ENCODE measurements at regions of chr1 and their contacts with region 1.

Region 1: GRCh38 chr1:114274621-114275317 is 121.1 kb upstream of the SYT6 start:
- DNase-seq: peak in 1 of 2 donors; percentile 13
- ATAC-seq: peak in 6 of 8 donors; percentile 28 to 76 (median 66)
- H3K4me3 ChIP-seq: no peak overlapping the region
- H3K27ac ChIP-seq: peak overlapping the region in 4 of 10 donors; percentile 18 to 57 (median 40)
- H3K4me1 ChIP-seq: peaks cover 0 to 15% (median 4%) of the 10 kb centered on the region in 9 donors
- H3K27me3 ChIP-seq: no peaks in the 10 kb centered on the region
- CTCF ChIP-seq: no peak

Region 2: DNA sequence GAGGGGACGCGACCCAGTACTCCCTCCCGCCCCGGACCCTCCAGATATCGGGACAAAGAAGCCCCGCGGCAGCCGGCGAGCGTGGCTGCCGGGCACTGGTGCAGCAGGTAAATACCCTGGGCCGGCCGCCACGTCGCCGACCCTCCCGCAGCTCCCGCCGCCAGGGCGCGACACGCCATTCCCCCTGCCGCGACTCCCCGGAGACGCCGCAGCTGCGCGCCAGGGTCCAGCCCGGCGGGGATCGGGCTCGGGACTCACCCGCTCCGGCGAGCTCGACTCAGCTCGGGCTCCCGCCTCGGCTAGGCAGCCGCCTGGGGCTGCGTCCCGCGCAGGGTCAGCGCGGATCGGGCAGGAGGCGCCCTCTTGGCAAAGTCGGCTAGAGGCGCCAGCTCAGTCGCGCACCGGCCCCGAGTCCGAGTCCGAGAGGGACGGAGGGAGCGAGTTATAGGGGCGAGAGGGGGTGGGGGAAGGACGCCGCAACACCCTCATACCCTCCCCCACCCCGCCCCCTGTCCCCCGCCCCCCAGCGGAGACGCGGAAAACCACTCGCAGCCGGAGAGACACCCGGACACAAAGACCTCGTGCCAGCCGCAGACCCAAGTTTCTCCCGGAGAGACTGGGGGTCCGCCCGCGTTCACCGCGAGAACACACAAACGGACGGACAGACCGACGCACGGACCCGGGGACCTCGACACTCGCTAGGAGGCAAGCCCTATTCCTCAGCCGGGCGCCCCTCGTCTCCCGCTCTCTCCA is 122.1 kb before region 1 on chr1:
- intact Hi-C with region 1: loop called in 1 of 10 experiments (anchors 5 kb)
- DNase-seq: peak; percentile 10 to 49
- ATAC-seq: peak; percentile 63 to 79 (median 71)
- H3K4me3 ChIP-seq: peak overlapping the region; percentile 14 to 54 (median 51)
- H3K27ac ChIP-seq: no peak overlapping the region
- H3K4me1 ChIP-seq: peaks cover 5 to 33% (median 24%) of the 10 kb centered on the region in 9 donors
- H3K27me3 ChIP-seq: peaks cover 36 to 99% (median 97%) of the 10 kb centered on the region in 7 donors
- CTCF ChIP-seq: peak in 3 of 9 donors; percentile 25 to 37 (median 29)

Region 3: DNA sequence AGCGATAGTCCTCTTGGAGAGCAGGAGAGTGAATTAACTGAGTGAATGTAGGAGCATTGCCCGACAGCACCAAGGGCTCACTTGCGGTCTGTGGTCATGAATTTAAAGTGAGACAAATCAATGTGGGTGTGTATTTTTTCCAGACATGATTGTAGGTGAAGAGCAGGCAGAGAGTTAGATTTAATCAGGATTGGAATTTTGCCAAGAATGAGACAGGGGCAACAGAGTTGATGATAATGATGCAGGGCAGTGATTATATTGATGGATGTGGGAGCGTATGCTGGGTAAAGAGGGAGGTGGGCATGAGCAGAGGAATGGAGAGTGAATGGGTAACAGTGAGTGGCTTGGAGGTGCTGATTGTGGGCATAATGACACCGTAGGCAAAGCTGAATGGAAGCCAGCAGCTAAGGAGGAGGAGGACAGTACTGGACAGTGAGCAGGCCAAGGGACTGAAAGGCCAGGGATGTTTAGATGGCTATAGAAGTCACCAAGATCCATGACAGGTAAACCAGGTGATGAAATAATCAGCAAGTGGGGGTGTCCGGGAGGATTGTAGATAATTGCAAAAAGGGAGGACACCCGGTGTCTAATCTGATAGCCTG is 101.0 kb before region 1 on chr1:
- intact Hi-C with region 1: no loop called
- DNase-seq: no peak
- ATAC-seq: no peak
- H3K4me3 ChIP-seq: no peak overlapping the region
- H3K27ac ChIP-seq: no peak overlapping the region
- H3K4me1 ChIP-seq: no peaks in the 10 kb centered on the region
- H3K27me3 ChIP-seq: peaks cover 0 to 15% (median 0%) of the 10 kb centered on the region in 7 donors
- CTCF ChIP-seq: no peak

Region 4: GRCh38 chr1:114219172-114219868 is 55.4 kb before region 1 on chr1:
- intact Hi-C with region 1: no loop called
- DNase-seq: no peak
- ATAC-seq: peak in 1 of 8 donors; percentile 23
- H3K4me3 ChIP-seq: peak overlapping the region in 6 of 10 donors; percentile 16 to 31 (median 22)
- H3K27ac ChIP-seq: peak overlapping the region in 2 of 10 donors; percentile 9 to 13
- H3K4me1 ChIP-seq: peaks cover 0 to 17% (median 2%) of the 10 kb centered on the region in 9 donors
- H3K27me3 ChIP-seq: no peaks in the 10 kb centered on the region
- CTCF ChIP-seq: peak in 4 of 9 donors; percentile 6 to 28 (median 20)